ENCODE measurements at regions of chr3 and their contacts with region 1.

Region 1: DNA sequence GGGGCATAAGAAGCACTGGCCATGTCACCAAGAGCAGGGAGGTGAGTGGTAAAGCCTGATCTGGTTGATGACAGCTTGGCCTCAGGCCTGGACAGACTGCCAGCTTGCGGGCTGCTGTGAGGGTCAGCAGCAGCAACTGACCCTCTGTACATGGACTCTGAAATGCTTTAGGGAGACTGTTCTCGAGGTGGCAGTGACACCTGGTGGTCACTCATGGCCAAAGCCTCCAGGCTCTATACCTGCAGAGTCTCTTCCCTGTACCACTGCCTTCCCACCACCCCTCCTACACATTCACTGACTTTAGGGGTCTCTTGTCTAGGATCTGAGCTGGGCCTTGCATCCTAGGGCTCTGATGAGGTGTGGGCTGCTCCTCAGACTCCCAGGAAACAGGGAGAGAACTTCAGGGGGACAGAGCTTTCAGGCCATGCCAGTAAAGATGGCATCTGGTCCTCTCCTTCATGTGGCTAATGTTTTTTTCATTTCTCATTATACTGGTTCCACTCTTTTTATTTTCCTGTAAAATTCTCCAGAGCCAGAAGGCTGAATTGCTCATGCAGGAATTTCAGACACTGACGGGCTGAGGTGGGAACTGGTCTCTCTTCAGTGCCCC is 17.2 kb upstream of the TIMP4 start:
- DNase-seq: peak; percentile 72
- H3K4me3 Mint-ChIP-seq: no peak overlapping the region
- H3K27ac Mint-ChIP-seq: no peak overlapping the region
- H3K4me1 Mint-ChIP-seq: peaks cover 24% of the 10 kb centered on the region
- H3K27me3 Mint-ChIP-seq: no peaks in the 10 kb centered on the region
- CTCF ChIP-seq: peak; percentile 78

Region 2: DNA sequence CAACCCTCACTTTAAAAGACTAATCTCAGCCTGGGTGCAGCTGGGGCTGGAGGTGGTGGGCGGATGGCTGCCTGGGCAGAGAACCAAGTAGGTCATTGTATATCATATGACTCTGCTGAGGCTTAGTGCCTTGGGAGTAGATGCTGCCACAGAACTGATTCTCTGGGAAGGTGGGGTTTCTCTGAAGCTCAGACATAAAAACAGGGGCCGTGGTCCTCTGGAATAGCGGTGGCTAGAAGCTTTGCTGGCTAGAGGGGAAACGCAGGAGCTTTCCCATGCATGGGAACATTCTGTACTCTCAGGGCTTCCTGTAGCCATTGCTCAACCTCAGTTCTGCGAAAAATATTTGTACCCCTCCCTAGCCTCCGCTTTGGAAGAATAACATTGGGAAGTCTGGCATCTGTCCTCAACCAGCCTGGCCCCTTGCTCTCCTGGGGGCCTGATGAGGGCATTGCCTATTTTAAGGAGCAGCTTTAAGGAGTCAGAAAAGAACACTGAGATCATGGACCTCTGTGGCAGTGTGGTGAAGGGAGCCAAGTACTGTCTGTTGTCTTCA is 31.9 kb before region 1 on chr3:
- CTCF ChIA-PET with region 1: interaction called, 279 read pairs
- POLR2A ChIA-PET with region 1: interaction called, 3 read pairs
- intact Hi-C with region 1: no loop called
- DNase-seq: peak; percentile 90
- H3K4me3 Mint-ChIP-seq: peak overlapping the region; percentile 38
- H3K27ac Mint-ChIP-seq: peak overlapping the region; percentile 94
- H3K4me1 Mint-ChIP-seq: peaks cover 28% of the 10 kb centered on the region
- H3K27me3 Mint-ChIP-seq: no peaks in the 10 kb centered on the region
- CTCF ChIP-seq: no peak

Region 3: GRCh38 chr3:12158387-12159226 is 17.3 kb before region 1 on chr3 and contains the start of gene TIMP4:
- CTCF ChIA-PET with region 1: interaction called, 45 read pairs
- POLR2A ChIA-PET with region 1: no interaction called
- intact Hi-C with region 1: no loop called
- DNase-seq: no peak
- H3K4me3 Mint-ChIP-seq: no peak within 1 kb of the TSS
- H3K27ac Mint-ChIP-seq: no peak within 1 kb of the TSS
- H3K4me1 Mint-ChIP-seq: peaks cover 12% of the 10 kb centered on the region
- H3K27me3 Mint-ChIP-seq: no peaks in the 10 kb centered on the region
- CTCF ChIP-seq: no peak
- total RNA-seq, gene TIMP4: not detected in 2 replicates

Region 4: GRCh38 chr3:12187448-12188327 is 11.7 kb after region 1 on chr3:
- CTCF ChIA-PET with region 1: interaction called, 86 read pairs
- POLR2A ChIA-PET with region 1: interaction called, 3 read pairs
- intact Hi-C with region 1: no loop called
- DNase-seq: peak; percentile 60
- H3K4me3 Mint-ChIP-seq: peak overlapping the region; percentile 33
- H3K27ac Mint-ChIP-seq: peak overlapping the region; percentile 96
- H3K4me1 Mint-ChIP-seq: peaks cover 31% of the 10 kb centered on the region
- H3K27me3 Mint-ChIP-seq: no peaks in the 10 kb centered on the region
- CTCF ChIP-seq: no peak

Region 5: DNA sequence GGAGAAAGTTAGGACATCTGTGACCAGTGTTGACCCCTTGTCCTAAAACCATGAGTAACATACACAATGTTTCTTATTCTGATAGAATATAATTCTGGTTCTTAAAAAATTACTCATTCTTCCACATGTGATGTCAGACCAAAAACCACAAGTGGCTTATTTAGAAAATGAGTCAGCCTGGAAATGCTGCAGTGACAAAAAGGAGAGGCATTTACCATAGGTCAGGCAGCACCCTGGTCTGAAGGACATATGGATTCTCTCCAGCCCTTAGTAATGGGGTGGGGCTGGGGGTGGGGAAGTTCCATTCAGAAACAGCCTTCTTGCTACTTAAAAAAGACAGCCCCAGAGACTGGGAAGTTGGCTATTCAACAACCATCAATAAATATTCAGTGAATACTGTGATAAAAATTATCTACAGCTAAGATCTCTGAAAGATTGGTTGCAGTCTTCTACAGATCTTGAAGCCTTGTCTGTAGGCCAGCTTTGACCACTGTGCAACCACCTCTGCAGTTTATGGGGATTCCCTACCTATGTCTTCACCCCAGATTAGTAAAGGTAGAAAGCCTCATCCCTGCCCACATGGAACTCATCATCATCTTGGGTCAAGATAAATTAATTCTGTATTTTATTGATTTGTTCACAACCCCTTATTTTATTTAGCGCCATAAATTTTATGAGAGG is 17.7 kb after region 1 on chr3:
- CTCF ChIA-PET with region 1: interaction called, 86 read pairs
- POLR2A ChIA-PET with region 1: interaction called, 3 read pairs
- intact Hi-C with region 1: loop called (anchors 2 kb)
- DNase-seq: peak; percentile 97
- H3K4me3 Mint-ChIP-seq: peak overlapping the region; percentile 24
- H3K27ac Mint-ChIP-seq: peak overlapping the region; percentile 89
- H3K4me1 Mint-ChIP-seq: peaks cover 42% of the 10 kb centered on the region
- H3K27me3 Mint-ChIP-seq: no peaks in the 10 kb centered on the region
- CTCF ChIP-seq: no peak

Region 6: GRCh38 chr3:12287727-12288191 is 111.8 kb after region 1 on chr3:
- CTCF ChIA-PET with region 1: interaction called, 3 read pairs
- POLR2A ChIA-PET with region 1: no interaction called
- intact Hi-C with region 1: loop called (anchors 5 kb)
- DNase-seq: peak; percentile 42
- H3K4me3 Mint-ChIP-seq: peak overlapping the region; percentile 70
- H3K27ac Mint-ChIP-seq: no peak overlapping the region
- H3K4me1 Mint-ChIP-seq: peaks cover 5% of the 10 kb centered on the region
- H3K27me3 Mint-ChIP-seq: no peaks in the 10 kb centered on the region
- CTCF ChIP-seq: no peak

Region 7: GRCh38 chr3:12303534-12303933 is 127.6 kb after region 1 on chr3:
- CTCF ChIA-PET with region 1: no interaction called
- POLR2A ChIA-PET with region 1: no interaction called
- intact Hi-C with region 1: no loop called
- DNase-seq: peak; percentile 76
- H3K4me3 Mint-ChIP-seq: no peak overlapping the region
- H3K27ac Mint-ChIP-seq: no peak overlapping the region
- H3K4me1 Mint-ChIP-seq: peaks cover 11% of the 10 kb centered on the region
- H3K27me3 Mint-ChIP-seq: no peaks in the 10 kb centered on the region
- CTCF ChIP-seq: no peak